Activated CD8-positive, alpha-beta T cell treated with anti-CD3 and anti-CD28 coated beads for 36 hours (primary cell): ENCODE measurements at regions of chr19 and their contacts with region 1.

Region 1: DNA sequence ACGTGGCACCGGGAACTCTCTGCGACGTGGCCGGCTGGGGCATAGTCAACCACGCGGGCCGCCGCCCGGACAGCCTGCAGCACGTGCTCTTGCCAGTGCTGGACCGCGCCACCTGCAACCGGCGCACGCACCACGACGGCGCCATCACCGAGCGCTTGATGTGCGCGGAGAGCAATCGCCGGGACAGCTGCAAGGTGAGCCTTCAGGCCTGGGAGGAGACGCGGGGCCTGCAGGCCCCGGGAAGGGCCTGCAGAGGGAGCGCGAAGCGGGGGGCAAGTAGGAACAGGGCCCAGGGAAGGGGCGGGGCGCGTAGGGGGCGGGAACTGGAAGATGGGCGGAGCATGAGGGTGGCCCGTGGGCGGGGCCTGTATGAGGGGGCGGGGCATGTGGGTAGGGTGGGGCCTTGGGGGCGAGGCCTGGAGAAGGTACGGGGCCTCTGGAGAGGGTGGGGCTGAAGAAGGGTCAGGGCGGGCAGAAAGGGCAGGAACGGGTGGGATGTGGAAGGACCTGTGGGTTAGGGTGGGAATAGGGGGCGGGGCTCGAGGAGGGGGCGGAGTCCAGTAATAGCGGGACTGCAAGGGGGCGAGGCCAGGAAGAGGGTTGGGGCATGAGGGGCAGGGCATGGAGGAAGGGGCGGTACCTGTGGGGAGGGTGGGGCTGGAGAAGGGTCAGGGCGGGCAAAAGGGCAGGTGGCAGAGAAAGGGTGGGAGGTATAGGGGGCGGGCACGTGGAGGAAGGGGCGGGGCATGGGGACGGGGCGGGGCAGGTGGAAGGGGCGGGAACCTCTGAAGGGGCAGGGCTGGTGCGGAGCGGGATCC is 2.5 kb downstream of the CFD start:
- DNase-seq: peak; percentile 72
- ATAC-seq: peak; percentile 47
- H3K4me3 Mint-ChIP-seq: no peak overlapping the region
- H3K27ac Mint-ChIP-seq: no peak overlapping the region
- H3K4me1 Mint-ChIP-seq: peaks cover 14% of the 10 kb centered on the region
- H3K27me3 Mint-ChIP-seq: peaks cover 13% of the 10 kb centered on the region
- CTCF ChIP-seq: no peak

Region 2: GRCh38 chr19:917323-918151 is 55.6 kb after region 1 on chr19 and contains the start of gene KISS1R:
- CTCF ChIA-PET with region 1: interaction called, 28 read pairs
- POLR2A ChIA-PET with region 1: interaction called, 8 read pairs
- intact Hi-C with region 1: loop called (anchors 2 kb)
- DNase-seq: peak; percentile 65
- ATAC-seq: peak; percentile 6
- H3K4me3 Mint-ChIP-seq: peak within 1 kb of the TSS; percentile 73
- H3K27ac Mint-ChIP-seq: no peak within 1 kb of the TSS
- H3K4me1 Mint-ChIP-seq: peaks cover 16% of the 10 kb centered on the region
- H3K27me3 Mint-ChIP-seq: peaks cover 2% of the 10 kb centered on the region
- CTCF ChIP-seq: peak; percentile 88
- total RNA-seq, gene KISS1R: 14.0 to 15.5 TPM

Region 3: DNA sequence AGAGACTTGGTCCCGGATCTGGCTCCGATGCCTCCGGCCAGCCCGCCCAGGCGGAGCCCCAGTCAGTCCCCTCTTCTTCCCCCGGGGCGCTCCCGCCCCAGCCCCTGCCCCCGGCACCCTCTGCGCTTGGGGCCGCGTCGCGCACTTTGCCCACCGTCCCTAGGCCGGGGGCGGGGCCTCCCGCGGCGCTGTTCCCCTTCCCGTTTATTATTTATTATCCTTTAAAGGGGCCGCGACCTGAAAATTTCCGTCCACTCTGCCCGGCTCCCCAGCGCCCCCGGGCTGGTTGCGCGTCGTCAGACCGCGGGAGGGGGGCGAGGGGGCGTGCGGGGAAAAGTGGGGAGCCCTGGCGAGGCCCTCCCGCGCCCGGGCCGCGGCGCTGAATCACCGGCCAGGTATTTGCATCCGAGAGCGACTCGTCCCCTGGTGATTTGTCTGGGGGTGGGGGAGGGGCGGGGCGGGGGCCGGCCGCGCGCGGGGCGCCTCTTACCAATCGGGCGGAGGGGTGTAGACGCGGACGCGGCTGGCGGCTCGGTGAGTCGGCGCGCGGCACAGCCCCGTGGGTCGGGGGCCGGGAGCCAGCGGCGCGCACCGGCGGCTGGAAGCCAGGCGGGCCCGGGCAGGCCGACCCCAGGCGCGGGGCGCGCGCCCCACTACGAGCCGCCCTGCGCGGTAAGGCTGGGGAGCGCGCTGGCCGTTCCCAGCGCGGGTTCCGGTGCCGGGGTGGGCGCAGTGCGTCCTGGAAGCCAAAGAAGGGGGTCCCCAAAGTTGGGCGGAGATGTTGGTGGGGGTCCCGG is 63.8 kb after region 1 on chr19 and contains the start of gene ARID3A:
- CTCF ChIA-PET with region 1: interaction called, 28 read pairs
- POLR2A ChIA-PET with region 1: no interaction called
- intact Hi-C with region 1: loop called (anchors 2 kb)
- DNase-seq: peak; percentile 84
- ATAC-seq: peak; percentile 67
- H3K4me3 Mint-ChIP-seq: peak within 1 kb of the TSS; percentile 73
- H3K27ac Mint-ChIP-seq: peak within 1 kb of the TSS; percentile 76
- H3K4me1 Mint-ChIP-seq: peaks cover 19% of the 10 kb centered on the region
- H3K27me3 Mint-ChIP-seq: no peaks in the 10 kb centered on the region
- CTCF ChIP-seq: no peak
- total RNA-seq, gene ARID3A: 18.7 to 22.1 TPM